ENCODE measurements at regions of chr2 and their contacts with region 1.

Region 1: GRCh38 chr2:45778720-45779171 is 127.3 kb downstream of the PRKCE start:
- DNase-seq: no peak
- H3K4me3 ChIP-seq: no peak overlapping the region
- H3K27ac ChIP-seq: no peak overlapping the region
- H3K4me1 ChIP-seq: peaks cover 6 to 71% (median 49%) of the 10 kb centered on the region in 4 donors
- H3K27me3 ChIP-seq: no peaks in the 10 kb centered on the region
- CTCF ChIP-seq: peak; percentile 77 to 82 (median 79)
- EP300 ChIP-seq: no peak
- POLR2A ChIP-seq: no peak

Region 2: GRCh38 chr2:45874344-45874743 is 95.6 kb after region 1 on chr2:
- intact Hi-C with region 1: no loop called
- DNase-seq: no peak
- H3K4me3 ChIP-seq: no peak overlapping the region
- H3K27ac ChIP-seq: peak overlapping the region; percentile 3 to 27 (median 12)
- H3K4me1 ChIP-seq: peaks cover 16 to 27% (median 19%) of the 10 kb centered on the region in 4 donors
- H3K27me3 ChIP-seq: no peaks in the 10 kb centered on the region
- CTCF ChIP-seq: no peak
- EP300 ChIP-seq: no peak
- POLR2A ChIP-seq: no peak

Region 3: DNA sequence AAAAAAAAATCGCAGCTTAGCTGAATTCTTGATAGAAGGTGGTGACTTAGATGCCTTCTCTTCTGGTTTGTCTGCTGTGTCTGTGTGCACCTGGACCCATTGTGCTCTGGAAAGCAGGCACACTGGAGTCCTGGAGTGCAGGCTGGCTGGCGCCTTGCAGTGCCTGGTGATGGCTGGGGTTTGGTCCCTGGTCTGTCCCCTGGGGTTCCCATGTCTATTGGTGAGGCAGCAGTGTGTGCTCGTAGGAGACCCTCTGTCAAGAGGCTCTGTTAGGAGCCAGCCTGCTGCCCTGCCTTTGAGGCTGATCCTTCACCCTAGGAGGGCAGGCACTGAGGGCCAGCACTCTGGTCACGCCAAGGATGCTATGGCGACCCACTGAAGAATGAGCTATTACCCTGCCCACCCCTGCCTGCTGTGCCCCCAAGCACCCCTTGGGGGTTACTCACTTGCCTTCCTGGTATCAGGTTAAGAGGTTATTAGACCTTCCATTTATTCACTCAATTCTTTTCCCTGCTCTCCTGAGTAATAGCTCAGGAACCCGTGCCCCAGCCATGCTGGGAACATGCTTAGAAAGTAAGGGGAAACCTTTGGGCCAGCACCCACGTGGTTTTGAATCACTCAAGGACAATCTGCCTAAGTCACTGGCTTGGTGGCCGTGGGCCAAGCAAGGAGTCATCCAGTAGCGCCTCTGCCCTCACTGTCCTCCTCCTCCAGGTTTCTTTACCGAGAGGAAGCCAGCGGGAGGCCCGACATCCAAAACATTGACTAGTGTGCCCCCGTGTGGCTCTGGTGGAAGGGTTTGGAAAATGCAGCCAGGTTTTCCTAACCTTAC is 157.3 kb after region 1 on chr2:
- intact Hi-C with region 1: loop called (anchors 5 kb)
- DNase-seq: peak; percentile 98
- H3K4me3 ChIP-seq: no peak overlapping the region
- H3K27ac ChIP-seq: peak overlapping the region; percentile 68 to 75 (median 74)
- H3K4me1 ChIP-seq: peaks cover 15 to 39% (median 36%) of the 10 kb centered on the region in 4 donors
- H3K27me3 ChIP-seq: no peaks in the 10 kb centered on the region
- CTCF ChIP-seq: peak; percentile 77 to 89 (median 83)
- EP300 ChIP-seq: no peak
- POLR2A ChIP-seq: no peak

Measured in esophagus muscularis mucosa (tissue), 4 donors.